PC-3 (cell line): ENCODE measurements at regions of chr1 and their contacts with region 1.

Region 1: DNA sequence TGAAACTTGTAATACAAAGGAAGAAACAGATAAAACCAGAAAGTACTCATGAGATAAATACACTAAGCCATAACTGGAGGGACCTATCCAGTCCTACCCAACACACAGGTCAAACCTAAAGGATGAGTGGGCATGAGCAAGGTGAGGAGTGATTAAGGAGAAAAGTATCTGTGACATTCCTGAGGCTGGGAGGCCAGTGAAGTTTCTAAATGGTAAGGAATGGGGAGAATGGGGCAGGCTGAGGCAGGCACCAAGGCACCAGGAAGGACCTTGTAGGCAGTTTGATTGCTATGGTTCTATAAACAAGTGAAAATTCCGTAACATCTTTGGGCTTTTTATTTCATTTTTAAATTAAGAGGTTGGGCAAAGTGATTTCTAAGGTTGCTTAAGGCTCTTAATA is 10.4 kb downstream of the DDX59 start:
- DNase-seq: peak; percentile 98
- ATAC-seq: peak; percentile 98
- H3K4me3 ChIP-seq: no peak overlapping the region
- H3K27ac ChIP-seq: 0 out of 2 replicates have a peak overlapping the region, but pooled peaks have one; percentile 7
- H3K4me1 ChIP-seq: peaks cover 33% of the 10 kb centered on the region
- H3K27me3 ChIP-seq: no peaks in the 10 kb centered on the region
- CTCF ChIP-seq: no peak

Region 2: DNA sequence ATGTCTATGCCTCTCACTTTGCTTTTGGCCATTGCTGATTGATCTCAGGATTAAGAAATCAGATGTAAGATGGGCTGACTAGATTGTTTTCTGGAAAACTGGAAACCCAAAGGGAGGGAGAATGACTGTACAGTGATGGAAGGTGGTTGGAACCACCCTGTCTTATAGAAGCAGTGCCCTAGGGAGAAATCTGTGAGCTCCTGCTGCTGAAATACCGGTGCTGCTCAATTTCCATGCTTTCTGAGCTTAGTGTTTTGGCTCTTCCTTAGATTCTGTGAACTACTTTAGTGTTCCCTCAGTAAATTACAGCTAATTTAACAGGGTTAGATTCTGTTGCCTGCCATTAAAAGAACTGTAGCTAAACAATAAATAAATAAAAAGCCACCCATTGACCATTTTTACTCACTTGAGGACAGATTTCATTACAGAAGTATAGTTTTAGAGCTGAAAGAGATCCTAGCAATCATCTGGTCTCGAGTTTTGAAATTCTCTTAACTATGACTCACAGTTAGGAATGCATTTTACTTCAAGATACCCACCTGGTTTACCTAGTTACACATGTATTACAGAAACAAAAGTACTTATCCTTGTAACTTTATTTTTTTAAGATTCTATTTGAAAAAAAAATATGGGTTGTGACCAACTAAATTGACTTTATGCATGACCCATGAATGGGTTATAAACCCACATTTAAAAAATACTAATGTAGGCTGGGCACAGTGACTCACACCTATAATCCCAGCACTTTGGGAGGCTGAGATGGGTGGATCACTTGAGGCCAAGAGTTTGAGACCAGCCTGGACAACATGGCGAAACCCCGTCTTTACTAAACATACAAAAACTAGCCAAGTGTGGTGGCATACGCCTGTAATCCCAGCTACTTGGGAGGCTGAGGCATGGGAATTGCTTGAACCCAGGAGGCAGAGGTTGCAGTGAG is 112.6 kb after region 1 on chr1:
- CTCF ChIA-PET with region 1: no interaction called
- POLR2A ChIA-PET with region 1: interaction called, 12 read pairs
- intact Hi-C with region 1: no loop called
- DNase-seq: peak; percentile 91
- ATAC-seq: peak; percentile 91
- H3K4me3 ChIP-seq: 0 out of 2 replicates have a peak overlapping the region, but pooled peaks have one; percentile 1
- H3K27ac ChIP-seq: peak overlapping the region; percentile 52
- H3K4me1 ChIP-seq: peaks cover 9% of the 10 kb centered on the region
- H3K27me3 ChIP-seq: no peaks in the 10 kb centered on the region
- CTCF ChIP-seq: no peak

Region 3: DNA sequence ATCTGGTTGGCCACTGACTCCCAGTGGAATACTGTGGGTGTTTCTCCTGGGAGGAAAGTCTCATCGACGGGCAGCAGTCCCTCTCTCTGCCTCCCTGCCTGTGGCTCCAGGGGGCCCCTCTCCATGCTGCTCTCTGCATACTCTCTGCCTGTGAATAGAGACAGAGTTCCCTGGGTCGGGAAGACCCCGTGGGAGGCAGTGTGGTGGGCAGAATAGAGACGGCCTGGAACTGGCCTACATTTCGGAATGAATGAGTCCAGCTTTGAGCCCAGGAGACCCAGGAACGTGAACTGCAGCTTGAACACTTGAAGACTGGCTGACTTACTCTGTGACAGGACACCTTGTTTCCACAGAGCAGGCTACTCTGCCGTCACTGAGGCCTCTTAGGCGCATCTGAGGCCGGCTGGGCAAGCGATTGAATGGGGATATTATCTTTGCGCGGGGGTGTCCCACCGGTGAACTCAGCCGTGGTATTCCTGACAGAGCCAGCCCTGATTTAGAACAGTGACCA is 300.2 kb after region 1 on chr1:
- CTCF ChIA-PET with region 1: no interaction called
- POLR2A ChIA-PET with region 1: no interaction called
- intact Hi-C with region 1: no loop called
- DNase-seq: no peak
- ATAC-seq: no peak
- H3K4me3 ChIP-seq: no peak overlapping the region
- H3K27ac ChIP-seq: no peak overlapping the region
- H3K4me1 ChIP-seq: no peaks in the 10 kb centered on the region
- H3K27me3 ChIP-seq: peaks cover 3% of the 10 kb centered on the region; the same call in 1 of the 2 replicates
- CTCF ChIP-seq: no peak